ENCODE measurements at regions of chr6 and their contacts with region 1.

Region 1: GRCh38 chr6:77620278-77620882 is 32.5 kb upstream of the MEI4 start:
- DNase-seq: peak; percentile 23
- ATAC-seq: peak; percentile 88
- H3K4me3 ChIP-seq: no peak overlapping the region
- H3K27ac ChIP-seq: no peak overlapping the region
- H3K4me1 ChIP-seq: no peaks in the 10 kb centered on the region
- H3K27me3 ChIP-seq: no peaks in the 10 kb centered on the region
- CTCF ChIP-seq: peak; percentile 29 to 76 (median 64); a peak in 5 of 6 replicates
- POLR2A ChIP-seq: no peak
- RAD21 ChIP-seq: peak; percentile 54

Region 2: DNA sequence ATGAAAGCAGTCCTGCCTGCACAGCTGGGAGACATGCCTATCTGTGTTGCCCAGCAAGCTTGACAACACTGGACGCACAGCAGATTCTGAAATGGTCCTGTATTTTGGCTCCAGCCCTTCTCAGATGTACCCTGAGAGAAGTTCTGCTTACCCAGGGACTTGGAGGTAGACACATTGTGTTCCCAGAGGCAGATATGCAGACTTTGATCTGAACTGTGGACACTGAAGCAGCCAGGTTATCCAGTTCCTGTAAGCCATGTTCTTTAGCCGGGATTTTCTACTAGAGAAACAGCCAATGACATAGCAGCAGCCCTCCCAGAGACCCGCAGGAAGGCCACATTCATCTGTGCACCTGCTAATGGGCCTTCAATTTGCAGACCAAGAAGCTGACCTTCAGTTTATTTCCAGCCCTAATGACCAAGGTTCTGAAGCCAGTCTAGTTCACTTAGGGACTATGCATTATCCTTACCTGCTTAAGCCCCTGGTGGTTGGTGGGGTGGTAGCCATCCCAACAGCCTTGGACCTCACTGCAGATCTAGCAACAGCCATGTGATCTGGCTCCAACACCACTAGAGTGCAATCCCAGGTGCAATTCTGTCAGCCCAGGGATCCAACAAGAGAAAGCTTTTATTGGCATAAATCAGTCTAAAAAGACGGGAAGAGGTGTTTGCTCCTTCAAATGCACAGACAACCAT is 166.7 kb after region 1 on chr6:
- CTCF ChIA-PET with region 1: no interaction called
- POLR2A ChIA-PET with region 1: no interaction called
- RAD21 ChIA-PET with region 1: no interaction called
- intact Hi-C with region 1: no loop called
- DNase-seq: no peak
- ATAC-seq: no peak
- H3K4me3 ChIP-seq: no peak overlapping the region
- H3K27ac ChIP-seq: no peak overlapping the region
- H3K4me1 ChIP-seq: no peaks in the 10 kb centered on the region
- H3K27me3 ChIP-seq: no peaks in the 10 kb centered on the region
- CTCF ChIP-seq: peak in 2 of 3 experiments; percentile 7 to 9; a peak in 1 of 6 replicates
- POLR2A ChIP-seq: no peak
- RAD21 ChIP-seq: no peak

Region 3: DNA sequence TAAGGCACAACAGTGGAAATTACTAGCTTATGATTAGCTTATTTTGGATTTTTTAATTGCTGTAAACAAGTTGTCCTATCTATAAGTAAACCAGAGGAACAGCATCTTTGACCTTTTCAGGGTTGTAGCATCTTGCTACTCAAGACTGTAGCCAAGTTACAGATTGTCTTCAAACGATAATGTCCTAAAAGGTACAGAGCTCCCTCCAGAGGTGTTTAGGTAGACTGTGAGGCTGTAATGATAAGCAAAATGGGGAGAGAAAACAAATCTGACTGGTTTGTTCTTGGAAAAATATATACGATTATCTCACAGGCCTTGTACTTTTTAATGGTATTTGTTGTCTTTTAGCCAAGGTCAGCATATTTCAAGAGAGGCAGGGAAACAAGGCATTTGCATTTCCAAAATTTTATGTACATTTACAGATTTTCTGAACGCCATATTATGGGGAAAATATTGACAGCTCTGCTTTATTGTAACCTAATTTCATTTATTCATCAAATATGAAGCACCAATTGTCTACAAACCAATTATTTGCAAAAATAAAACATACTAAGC is 305.9 kb after region 1 on chr6:
- CTCF ChIA-PET with region 1: interaction called, 11 read pairs
- POLR2A ChIA-PET with region 1: no interaction called
- RAD21 ChIA-PET with region 1: interaction called in 1 of 2 experiments, 3 read pairs
- intact Hi-C with region 1: loop called (anchors 10 kb)
- DNase-seq: peak; percentile 37
- ATAC-seq: peak; percentile 79
- H3K4me3 ChIP-seq: no peak overlapping the region
- H3K27ac ChIP-seq: no peak overlapping the region
- H3K4me1 ChIP-seq: no peaks in the 10 kb centered on the region
- H3K27me3 ChIP-seq: no peaks in the 10 kb centered on the region
- CTCF ChIP-seq: peak; percentile 54 to 57 (median 55); a peak in 4 of 6 replicates
- POLR2A ChIP-seq: no peak
- RAD21 ChIP-seq: peak; percentile 69

Region 4: DNA sequence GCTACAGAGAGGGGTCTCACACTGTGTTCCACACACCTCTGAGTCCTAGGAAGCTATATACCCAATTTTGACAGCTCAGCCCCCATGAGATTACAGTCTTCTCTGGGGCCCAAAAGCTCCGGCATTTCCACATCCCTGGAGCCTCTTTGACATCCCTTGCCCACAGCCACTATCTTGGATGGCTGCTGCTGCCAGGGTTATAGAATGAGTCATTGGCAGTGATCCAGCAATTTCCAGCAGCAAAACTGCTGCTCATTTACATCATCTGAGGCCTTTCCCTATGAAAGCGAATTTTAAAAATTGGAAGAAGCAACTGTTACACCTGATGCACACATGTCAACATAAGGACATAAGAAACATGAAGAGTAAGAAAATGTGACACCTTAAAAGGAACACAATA is 623.1 kb after region 1 on chr6:
- CTCF ChIA-PET with region 1: no interaction called
- POLR2A ChIA-PET with region 1: no interaction called
- RAD21 ChIA-PET with region 1: no interaction called
- intact Hi-C with region 1: loop called (anchors 10 kb)
- DNase-seq: no peak
- ATAC-seq: no peak
- H3K4me3 ChIP-seq: no peak overlapping the region
- H3K27ac ChIP-seq: no peak overlapping the region
- H3K4me1 ChIP-seq: no peaks in the 10 kb centered on the region
- H3K27me3 ChIP-seq: no peaks in the 10 kb centered on the region
- CTCF ChIP-seq: no peak
- POLR2A ChIP-seq: no peak
- RAD21 ChIP-seq: no peak

Region 5: DNA sequence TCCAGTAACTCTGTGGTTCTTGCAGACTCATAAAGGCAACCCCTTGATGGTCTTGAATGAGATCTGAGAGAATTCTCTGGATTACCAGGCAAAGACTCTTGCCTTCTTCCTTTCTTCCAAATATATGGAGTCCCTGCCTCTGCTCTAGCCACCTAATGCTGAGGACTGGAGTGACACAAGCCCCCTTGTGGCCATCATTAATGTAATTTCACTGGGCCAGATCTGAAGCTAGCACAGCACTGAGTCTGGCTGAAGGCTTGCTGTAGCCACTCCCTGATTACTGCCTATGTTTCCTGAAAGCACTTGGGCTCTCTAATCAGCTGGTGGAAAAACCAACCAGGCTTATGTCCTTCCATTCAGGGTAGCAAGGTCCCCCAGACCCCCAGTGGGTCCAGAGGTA is 687.6 kb after region 1 on chr6:
- CTCF ChIA-PET with region 1: no interaction called
- POLR2A ChIA-PET with region 1: no interaction called
- RAD21 ChIA-PET with region 1: no interaction called
- intact Hi-C with region 1: loop called (anchors 10 kb)
- DNase-seq: peak; percentile 41
- ATAC-seq: peak; percentile 99
- H3K4me3 ChIP-seq: no peak overlapping the region
- H3K27ac ChIP-seq: no peak overlapping the region
- H3K4me1 ChIP-seq: no peaks in the 10 kb centered on the region
- H3K27me3 ChIP-seq: no peaks in the 10 kb centered on the region
- CTCF ChIP-seq: peak; percentile 37 to 62 (median 58); a peak in 5 of 6 replicates
- POLR2A ChIP-seq: no peak
- RAD21 ChIP-seq: peak; percentile 46; the same call in 1 of the 2 replicates

Region 6: GRCh38 chr6:78810146-78810545 is 1189.8 kb after region 1 on chr6:
- CTCF ChIA-PET with region 1: interaction called, 16 read pairs
- POLR2A ChIA-PET with region 1: no interaction called
- RAD21 ChIA-PET with region 1: no interaction called
- intact Hi-C with region 1: no loop called
- DNase-seq: peak; percentile 31
- ATAC-seq: peak; percentile 90
- H3K4me3 ChIP-seq: no peak overlapping the region
- H3K27ac ChIP-seq: no peak overlapping the region
- H3K4me1 ChIP-seq: no peaks in the 10 kb centered on the region
- H3K27me3 ChIP-seq: no peaks in the 10 kb centered on the region
- CTCF ChIP-seq: peak; percentile 47 to 67 (median 67); a peak in 5 of 6 replicates
- POLR2A ChIP-seq: no peak
- RAD21 ChIP-seq: peak; percentile 74

Measured in HCT116 (cell line).